ENCODE measurements at regions of chr19 and their contacts with region 1.

Region 1: GRCh38 chr19:6862673-6863078 is 24.7 kb upstream of the ADGRE1 start:
- DNase-seq: peak; percentile 78
- H3K4me3 ChIP-seq: no peak overlapping the region
- H3K27ac ChIP-seq: no peak overlapping the region
- H3K4me1 ChIP-seq: peaks cover 3% of the 10 kb centered on the region
- H3K27me3 ChIP-seq: no peaks in the 10 kb centered on the region
- CTCF ChIP-seq: peak; percentile 87 to 88

Region 2: GRCh38 chr19:5904352-5905113 is 958.1 kb before region 1 on chr19 and contains the start of gene VMAC:
- CTCF ChIA-PET with region 1: interaction called, 11 read pairs
- dilution Hi-C with region 1: no loop called
- in situ Hi-C with region 1: no loop called
- intact Hi-C with region 1: no loop called
- DNase-seq: peak; percentile 100
- H3K4me3 ChIP-seq: peak within 1 kb of the TSS; percentile 70 to 82 (median 78)
- H3K27ac ChIP-seq: peak within 1 kb of the TSS; percentile 90
- H3K4me1 ChIP-seq: peaks cover 4% of the 10 kb centered on the region
- H3K27me3 ChIP-seq: no peaks in the 10 kb centered on the region
- CTCF ChIP-seq: no peak
- total RNA-seq, gene VMAC: 3.4 to 7.3 TPM

Region 3: GRCh38 chr19:6228541-6229215 is 634.0 kb before region 1 on chr19:
- CTCF ChIA-PET with region 1: interaction called, 11 read pairs
- dilution Hi-C with region 1: no loop called
- in situ Hi-C with region 1: no loop called
- intact Hi-C with region 1: no loop called
- DNase-seq: no peak
- H3K4me3 ChIP-seq: no peak overlapping the region
- H3K27ac ChIP-seq: no peak overlapping the region
- H3K4me1 ChIP-seq: peaks cover 25% of the 10 kb centered on the region
- H3K27me3 ChIP-seq: no peaks in the 10 kb centered on the region
- CTCF ChIP-seq: no peak

Region 4: GRCh38 chr19:6481541-6482342 is 380.9 kb before region 1 on chr19 and contains the start of gene DENND1C:
- CTCF ChIA-PET with region 1: no interaction called
- dilution Hi-C with region 1: no loop called
- in situ Hi-C with region 1: no loop called
- intact Hi-C with region 1: no loop called
- DNase-seq: no peak
- H3K4me3 ChIP-seq: no peak within 1 kb of the TSS
- H3K27ac ChIP-seq: no peak within 1 kb of the TSS
- H3K4me1 ChIP-seq: peaks cover 1% of the 10 kb centered on the region
- H3K27me3 ChIP-seq: no peaks in the 10 kb centered on the region
- CTCF ChIP-seq: peak; percentile 33 to 36
- total RNA-seq, gene DENND1C: 0.33 TPM in 1 of 2 donors, not detected in the other

Region 5: DNA sequence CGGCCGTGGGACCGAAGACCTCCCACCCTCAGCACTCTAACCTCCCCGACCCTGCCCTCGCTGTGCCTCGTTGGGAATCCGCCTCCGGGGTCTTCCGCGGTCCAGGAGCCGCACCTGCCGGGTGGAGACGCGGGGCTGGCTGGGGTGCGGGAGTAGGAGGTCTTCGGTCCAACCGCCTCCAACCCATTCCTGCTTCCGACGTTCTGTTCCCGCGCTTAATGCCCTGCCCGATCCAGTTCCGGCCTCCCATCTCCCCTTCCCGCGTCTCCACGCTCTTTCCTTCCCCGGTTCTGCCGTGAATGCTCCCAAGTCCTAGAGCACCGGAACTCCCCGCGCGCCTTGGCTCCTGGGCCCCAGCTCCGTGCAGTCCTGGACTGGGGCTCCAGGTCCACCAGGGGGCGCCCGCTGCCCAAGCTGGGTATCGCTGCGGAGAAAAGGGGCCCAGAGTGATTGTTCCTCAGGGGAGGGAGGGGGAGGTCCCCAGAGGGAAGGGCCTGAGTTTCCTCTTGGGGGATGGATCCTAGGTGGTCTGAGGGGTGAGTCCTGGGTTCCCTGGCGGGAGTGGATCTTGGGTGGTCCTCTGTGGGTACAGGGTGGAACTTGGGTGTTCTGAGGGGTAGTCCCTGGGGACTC is 345.9 kb before region 1 on chr19:
- CTCF ChIA-PET with region 1: interaction called, 3 read pairs
- dilution Hi-C with region 1: no loop called
- in situ Hi-C with region 1: loop called (anchors 10 to 25 kb)
- intact Hi-C with region 1: loop called (anchors 1 kb)
- DNase-seq: peak; percentile 78
- H3K4me3 ChIP-seq: peak overlapping the region; percentile 52 to 83 (median 67)
- H3K27ac ChIP-seq: peak overlapping the region; percentile 43
- H3K4me1 ChIP-seq: peaks cover 13% of the 10 kb centered on the region
- H3K27me3 ChIP-seq: no peaks in the 10 kb centered on the region
- CTCF ChIP-seq: peak; percentile 87 to 98

Region 6: GRCh38 chr19:6632002-6632621 is 230.6 kb before region 1 on chr19:
- CTCF ChIA-PET with region 1: interaction called, 3 read pairs
- dilution Hi-C with region 1: no loop called
- in situ Hi-C with region 1: loop called (anchors 10 to 25 kb)
- intact Hi-C with region 1: loop called (anchors 1 kb)
- DNase-seq: peak; percentile 59
- H3K4me3 ChIP-seq: no peak overlapping the region
- H3K27ac ChIP-seq: no peak overlapping the region
- H3K4me1 ChIP-seq: no peaks in the 10 kb centered on the region
- H3K27me3 ChIP-seq: no peaks in the 10 kb centered on the region
- CTCF ChIP-seq: peak; percentile 82 to 91

Region 7: GRCh38 chr19:6916952-6917351 is 54.3 kb after region 1 on chr19:
- CTCF ChIA-PET with region 1: no interaction called
- dilution Hi-C with region 1: no loop called
- in situ Hi-C with region 1: no loop called
- intact Hi-C with region 1: no loop called
- DNase-seq: no peak
- H3K4me3 ChIP-seq: no peak overlapping the region
- H3K27ac ChIP-seq: no peak overlapping the region
- H3K4me1 ChIP-seq: no peaks in the 10 kb centered on the region
- H3K27me3 ChIP-seq: no peaks in the 10 kb centered on the region
- CTCF ChIP-seq: no peak

Region 8: GRCh38 chr19:7069042-7069903 is 206.6 kb after region 1 on chr19 and contains the start of gene ZNF557:
- CTCF ChIA-PET with region 1: interaction called, 13 read pairs
- dilution Hi-C with region 1: no loop called
- in situ Hi-C with region 1: no loop called
- intact Hi-C with region 1: no loop called
- DNase-seq: peak; percentile 96
- H3K4me3 ChIP-seq: peak within 1 kb of the TSS; percentile 63 to 94 (median 89)
- H3K27ac ChIP-seq: peak within 1 kb of the TSS; percentile 51
- H3K4me1 ChIP-seq: peaks cover 6% of the 10 kb centered on the region
- H3K27me3 ChIP-seq: no peaks in the 10 kb centered on the region
- CTCF ChIP-seq: no peak
- total RNA-seq, gene ZNF557: 8.4 to 13.2 TPM

Measured in mammary epithelial cell (primary cell).